Activated CD4-positive, alpha-beta memory T cell treated with anti-CD3 and anti-CD28 coated beads for 36 hours (primary cell): ENCODE measurements at regions of chr1 and their contacts with region 1.

Region 1: DNA sequence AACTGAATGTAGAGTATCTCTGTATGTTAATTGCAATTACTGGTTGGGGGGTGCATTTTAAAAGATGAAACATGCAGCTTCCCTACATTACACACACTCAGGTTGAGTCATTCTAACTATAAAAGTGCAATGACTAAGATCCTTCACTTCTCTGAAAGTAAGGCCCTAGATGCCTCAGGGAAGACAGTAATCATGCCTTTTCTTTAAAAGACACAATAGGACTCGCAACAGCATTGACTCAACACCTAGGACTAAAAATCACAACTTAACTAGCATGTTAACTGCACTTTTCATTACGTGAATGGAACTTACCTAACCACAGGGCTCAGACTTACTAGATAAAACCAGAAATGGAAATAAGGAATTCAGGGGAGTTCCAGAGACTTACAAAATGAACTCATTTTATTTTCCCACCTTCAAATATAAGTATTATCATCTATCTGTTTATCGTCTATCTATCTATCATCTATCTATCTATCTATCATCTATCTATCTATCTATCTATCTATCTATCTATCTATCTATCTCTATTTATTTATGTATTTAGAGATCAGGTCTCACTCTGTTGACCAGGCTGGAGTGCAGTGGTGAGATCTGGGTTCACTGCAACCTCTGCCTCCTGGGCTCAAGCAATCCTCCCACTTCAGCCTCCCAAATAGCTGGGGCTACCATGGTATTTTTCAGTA is 47.8 kb downstream of the CHML start:
- DNase-seq: no peak
- H3K4me3 Mint-ChIP-seq: no peak overlapping the region
- H3K27ac Mint-ChIP-seq: peak overlapping the region; percentile 49
- H3K4me1 Mint-ChIP-seq: peaks cover 27% of the 10 kb centered on the region
- H3K27me3 Mint-ChIP-seq: no peaks in the 10 kb centered on the region

Region 2: GRCh38 chr1:241551759-241552638 is 40.4 kb before region 1 on chr1:
- CTCF ChIA-PET with region 1: no interaction called
- POLR2A ChIA-PET with region 1: interaction called, 5 read pairs
- intact Hi-C with region 1: loop called (anchors 1 kb)
- DNase-seq: peak; percentile 71
- H3K4me3 Mint-ChIP-seq: peak overlapping the region; percentile 68
- H3K27ac Mint-ChIP-seq: peak overlapping the region; percentile 96
- H3K4me1 Mint-ChIP-seq: peaks cover 23% of the 10 kb centered on the region
- H3K27me3 Mint-ChIP-seq: no peaks in the 10 kb centered on the region

Region 3: DNA sequence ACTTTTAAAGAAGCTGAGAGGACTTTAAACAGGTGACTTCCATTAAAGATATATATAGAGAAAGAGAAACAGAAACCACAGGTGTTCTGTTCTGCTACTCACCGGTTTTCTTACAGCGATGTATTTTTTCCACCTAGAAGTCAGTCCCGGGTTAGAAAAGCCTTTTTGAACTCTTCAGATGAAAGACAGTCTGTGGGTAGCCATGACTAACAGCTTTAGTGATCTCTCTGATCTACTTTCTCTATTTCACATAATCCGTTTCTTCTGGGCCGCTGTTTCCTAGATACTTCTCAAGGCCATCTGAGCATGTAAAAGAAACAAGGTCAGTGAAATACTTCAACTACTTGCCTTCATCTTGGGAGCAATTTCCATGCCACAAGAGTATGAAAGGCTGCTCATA is 84.8 kb after region 1 on chr1:
- CTCF ChIA-PET with region 1: no interaction called
- POLR2A ChIA-PET with region 1: no interaction called
- intact Hi-C with region 1: loop called (anchors 1 kb)
- DNase-seq: no peak
- H3K4me3 Mint-ChIP-seq: no peak overlapping the region
- H3K27ac Mint-ChIP-seq: no peak overlapping the region
- H3K4me1 Mint-ChIP-seq: peaks cover 15% of the 10 kb centered on the region
- H3K27me3 Mint-ChIP-seq: peaks cover 2% of the 10 kb centered on the region

Region 4: GRCh38 chr1:241702438-241702837 is 110.0 kb after region 1 on chr1:
- CTCF ChIA-PET with region 1: no interaction called
- POLR2A ChIA-PET with region 1: no interaction called
- intact Hi-C with region 1: no loop called
- DNase-seq: no peak
- H3K4me3 Mint-ChIP-seq: no peak overlapping the region
- H3K27ac Mint-ChIP-seq: no peak overlapping the region
- H3K4me1 Mint-ChIP-seq: peaks cover 11% of the 10 kb centered on the region
- H3K27me3 Mint-ChIP-seq: no peaks in the 10 kb centered on the region